Prostate gland (tissue), 2 donors: ENCODE measurements at regions of chr17 and their contacts with region 1.

Region 1: GRCh38 chr17:74961657-74962490 is 10.7 kb downstream of the HID1 start:
- DNase-seq: peak; percentile 88
- H3K4me3 ChIP-seq: no peak overlapping the region
- H3K27ac ChIP-seq: no peak overlapping the region
- H3K4me1 ChIP-seq: no peaks in the 10 kb centered on the region
- H3K27me3 ChIP-seq: no peaks in the 10 kb centered on the region
- CTCF ChIP-seq: peak; percentile 52 to 92 (median 86)
- POLR2A ChIP-seq: no peak

Region 2: GRCh38 chr17:74779948-74780400 is 181.9 kb before region 1 on chr17:
- intact Hi-C with region 1: no loop called
- DNase-seq: no peak
- H3K4me3 ChIP-seq: no peak overlapping the region
- H3K27ac ChIP-seq: no peak overlapping the region
- H3K4me1 ChIP-seq: peaks cover 5% of the 10 kb centered on the region
- H3K27me3 ChIP-seq: no peaks in the 10 kb centered on the region
- CTCF ChIP-seq: no peak
- POLR2A ChIP-seq: no peak

Region 3: GRCh38 chr17:74790161-74791054 is 171.5 kb before region 1 on chr17:
- intact Hi-C with region 1: loop called (anchors 2 kb)
- DNase-seq: no peak
- H3K4me3 ChIP-seq: no peak overlapping the region
- H3K27ac ChIP-seq: no peak overlapping the region
- H3K4me1 ChIP-seq: no peaks in the 10 kb centered on the region
- H3K27me3 ChIP-seq: no peaks in the 10 kb centered on the region
- CTCF ChIP-seq: no peak
- POLR2A ChIP-seq: no peak

Region 4: GRCh38 chr17:74842599-74843351 is 119.1 kb before region 1 on chr17:
- intact Hi-C with region 1: no loop called
- DNase-seq: peak; percentile 35
- H3K4me3 ChIP-seq: peak overlapping the region; percentile 19 to 30
- H3K27ac ChIP-seq: no peak overlapping the region
- H3K4me1 ChIP-seq: no peaks in the 10 kb centered on the region
- H3K27me3 ChIP-seq: no peaks in the 10 kb centered on the region
- CTCF ChIP-seq: peak; percentile 25 to 72 (median 49)
- POLR2A ChIP-seq: no peak

Region 5: DNA sequence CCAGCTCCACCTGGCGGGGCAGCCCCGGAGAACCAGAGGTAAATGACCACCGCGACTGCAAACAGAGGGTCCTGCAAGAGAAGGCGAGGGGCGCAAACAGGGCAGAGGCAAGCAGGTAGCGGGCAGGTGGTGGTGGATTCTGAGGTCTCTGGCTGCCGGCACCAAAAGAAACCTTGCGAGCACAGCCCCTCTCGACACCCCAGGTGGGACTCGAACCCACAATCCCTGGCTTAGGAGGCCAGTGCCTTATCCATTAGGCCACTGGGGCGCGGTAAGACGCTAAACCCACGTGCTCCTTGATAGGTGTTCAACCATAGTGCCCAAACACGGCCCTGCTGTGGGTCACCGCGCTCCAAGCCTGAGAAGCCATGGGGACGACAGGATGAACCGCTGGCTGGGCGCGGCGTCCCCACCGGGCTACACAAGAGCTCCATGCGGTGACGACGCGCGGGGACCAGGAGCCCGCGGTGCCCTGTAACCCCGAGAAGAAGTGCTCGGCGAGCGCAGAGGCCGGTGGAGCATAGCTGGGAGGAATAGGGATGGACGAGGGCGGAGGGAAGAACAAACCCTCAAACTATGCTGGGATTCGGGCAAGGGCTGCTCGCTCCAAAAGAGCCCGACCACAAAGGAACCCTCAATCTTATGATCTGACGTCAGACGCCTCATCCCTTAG is 72.5 kb after region 1 on chr17:
- intact Hi-C with region 1: loop called (anchors 5 kb)
- DNase-seq: peak; percentile 79
- H3K4me3 ChIP-seq: peak overlapping the region; percentile 35 to 52
- H3K27ac ChIP-seq: peak overlapping the region; percentile 73 to 91
- H3K4me1 ChIP-seq: peaks cover 6% of the 10 kb centered on the region
- H3K27me3 ChIP-seq: no peaks in the 10 kb centered on the region
- CTCF ChIP-seq: no peak
- POLR2A ChIP-seq: no peak

Region 6: DNA sequence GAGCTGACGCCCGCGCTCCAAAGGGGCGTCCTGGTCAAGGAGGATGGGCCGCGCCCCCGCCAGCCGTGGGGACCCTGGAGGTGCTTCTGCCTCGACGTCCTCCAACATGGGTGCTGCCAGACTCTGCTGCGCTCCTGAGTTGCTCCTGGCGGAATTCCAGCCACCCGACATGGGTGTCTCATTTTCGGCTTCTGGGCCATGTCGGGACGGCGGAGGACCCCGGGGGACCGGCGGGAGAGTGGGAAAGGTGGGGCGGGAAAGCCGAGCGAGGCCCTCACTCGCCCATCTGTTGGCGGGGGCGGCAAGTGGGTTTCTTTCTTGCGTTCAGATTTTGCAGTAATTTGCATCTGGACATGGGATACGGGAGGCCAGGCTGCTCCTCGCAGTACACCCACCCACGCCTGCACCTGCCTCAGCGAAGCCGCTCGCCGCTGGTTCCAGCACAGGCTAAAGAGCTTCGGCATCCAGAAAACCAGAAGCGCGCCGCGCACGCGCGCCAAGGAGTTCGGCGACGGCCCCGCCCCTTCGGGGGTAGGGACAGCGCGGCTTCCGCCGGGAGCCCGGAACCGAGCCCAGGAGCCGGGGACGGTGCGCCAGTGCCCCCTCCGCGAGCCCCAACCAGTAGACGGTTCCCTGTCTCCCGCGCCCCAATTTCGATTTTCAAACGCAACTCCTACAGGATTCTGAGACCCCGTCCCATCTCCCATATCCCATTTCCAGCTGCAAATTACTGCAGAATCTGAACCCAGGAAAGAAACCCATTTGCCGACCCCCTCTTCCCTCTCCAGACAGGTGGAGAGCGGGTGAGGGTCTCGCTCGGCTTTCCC is 147.7 kb after region 1 on chr17 and contains the start of gene ARMC7:
- intact Hi-C with region 1: loop called (anchors 5 kb)
- DNase-seq: peak; percentile 83
- H3K4me3 ChIP-seq: peak within 1 kb of the TSS; percentile 60 to 69
- H3K27ac ChIP-seq: peak within 1 kb of the TSS; percentile 75
- H3K4me1 ChIP-seq: no peaks in the 10 kb centered on the region
- H3K27me3 ChIP-seq: no peaks in the 10 kb centered on the region
- CTCF ChIP-seq: peak in 1 of 4 experiments; percentile 24
- POLR2A ChIP-seq: peak; percentile 80
- total RNA-seq, gene ARMC7: 13.6 to 15.1 TPM

Region 7: DNA sequence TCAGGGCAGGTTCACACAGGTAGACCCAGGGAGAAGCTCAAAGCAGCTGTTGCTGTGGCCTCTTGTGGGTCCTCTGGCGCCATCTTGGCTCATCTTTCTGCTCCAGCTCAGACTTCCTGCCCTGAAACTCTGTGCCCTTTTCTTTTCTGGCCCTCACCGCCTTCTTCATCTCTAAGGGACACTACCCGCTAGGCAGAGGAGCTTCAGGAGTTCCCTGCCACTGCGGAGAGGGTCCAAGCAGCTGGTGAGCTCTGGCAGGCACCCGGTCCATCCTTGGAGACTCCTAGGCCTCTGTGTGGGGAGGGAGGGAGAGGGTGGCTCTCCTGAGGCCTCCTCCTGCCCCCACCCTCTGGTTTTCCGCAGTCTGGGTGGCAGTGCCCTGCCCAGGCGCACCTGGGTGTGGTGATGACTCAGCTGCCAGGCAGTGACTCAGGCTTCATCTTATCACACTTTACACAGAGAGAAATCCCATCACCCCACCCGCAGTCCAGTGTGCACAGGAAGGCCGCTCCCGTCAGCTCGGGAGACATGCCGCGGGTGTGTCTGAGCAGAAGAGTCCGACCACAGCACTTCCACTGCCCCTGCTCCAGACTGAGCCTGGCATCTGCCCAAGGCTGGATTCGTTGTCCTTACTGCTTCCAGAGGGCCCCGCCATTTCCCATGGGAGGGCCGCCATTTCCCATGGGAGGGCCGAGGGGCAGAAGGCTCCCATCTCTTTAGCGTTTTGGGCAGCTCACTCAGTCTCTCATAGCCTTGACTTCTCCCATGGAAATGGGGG is 162.4 kb after region 1 on chr17:
- intact Hi-C with region 1: no loop called
- DNase-seq: peak; percentile 34
- H3K4me3 ChIP-seq: no peak overlapping the region
- H3K27ac ChIP-seq: no peak overlapping the region
- H3K4me1 ChIP-seq: no peaks in the 10 kb centered on the region
- H3K27me3 ChIP-seq: no peaks in the 10 kb centered on the region
- CTCF ChIP-seq: no peak
- POLR2A ChIP-seq: peak; percentile 49

Region 8: GRCh38 chr17:75199886-75200618 is 238.2 kb after region 1 on chr17:
- intact Hi-C with region 1: loop called (anchors 5 kb)
- DNase-seq: no peak
- H3K4me3 ChIP-seq: no peak overlapping the region
- H3K27ac ChIP-seq: no peak overlapping the region
- H3K4me1 ChIP-seq: no peaks in the 10 kb centered on the region
- H3K27me3 ChIP-seq: no peaks in the 10 kb centered on the region
- CTCF ChIP-seq: no peak
- POLR2A ChIP-seq: no peak